ENCODE measurements at regions of chr2 and their contacts with region 1.

Region 1: GRCh38 chr2:198162276-198162675 is 357.9 kb downstream of the PLCL1 start:
- DNase-seq: peak in 2 of 10 donors; percentile 43 to 52
- H3K4me3 ChIP-seq: peak overlapping the region in 2 of 59 donors; percentile 5 to 27
- H3K27ac ChIP-seq: peak overlapping the region in 58 of 59 donors; percentile 53 to 97 (median 92)
- H3K27me3 ChIP-seq: no peaks in the 10 kb centered on the region
- CTCF ChIP-seq: peak in 3 of 56 donors; percentile 6 to 19 (median 13)

Region 2: GRCh38 chr2:197986977-197987376 is 175.3 kb before region 1 on chr2:
- intact Hi-C with region 1: no loop called
- DNase-seq: no peak
- H3K4me3 ChIP-seq: no peak overlapping the region
- H3K27ac ChIP-seq: no peak overlapping the region
- H3K27me3 ChIP-seq: no peaks in the 10 kb centered on the region
- CTCF ChIP-seq: no peak

Region 3: DNA sequence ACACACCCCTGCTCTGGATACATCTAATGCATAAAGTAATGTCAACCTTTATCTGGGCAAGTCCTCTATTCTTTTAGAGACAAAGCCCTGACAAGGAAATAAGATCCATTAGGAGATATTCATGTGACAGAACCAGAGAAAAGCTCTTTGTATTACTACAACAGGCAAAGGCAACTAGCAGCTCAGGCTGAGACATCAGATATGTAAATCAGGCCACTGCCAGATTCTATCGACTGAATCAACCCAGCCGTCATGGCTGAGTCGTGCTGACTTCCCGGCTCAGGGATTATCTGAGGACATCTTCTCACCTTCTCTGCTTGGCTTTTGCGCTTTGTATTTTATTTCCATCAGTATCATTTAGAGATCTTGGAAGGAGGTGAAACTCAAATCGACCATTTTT is 63.4 kb before region 1 on chr2:
- intact Hi-C with region 1: loop called in 1 of 2 experiments (anchors 5 kb)
- DNase-seq: peak in 8 of 10 donors; percentile 22 to 72 (median 54)
- H3K4me3 ChIP-seq: peak overlapping the region in 2 of 59 donors; percentile 4 to 15
- H3K27ac ChIP-seq: peak overlapping the region in 56 of 59 donors; percentile 1 to 90 (median 76)
- H3K27me3 ChIP-seq: no peaks in the 10 kb centered on the region
- CTCF ChIP-seq: peak in 2 of 56 donors; percentile 14 to 26

Region 4: GRCh38 chr2:198214114-198214596 is 51.9 kb after region 1 on chr2:
- intact Hi-C with region 1: loop called in 1 of 2 experiments (anchors 10 kb)
- DNase-seq: no peak
- H3K4me3 ChIP-seq: no peak overlapping the region
- H3K27ac ChIP-seq: peak overlapping the region in 1 of 59 donors; percentile 17
- H3K27me3 ChIP-seq: no peaks in the 10 kb centered on the region
- CTCF ChIP-seq: no peak

Region 5: GRCh38 chr2:198273660-198274059 is 111.4 kb after region 1 on chr2:
- intact Hi-C with region 1: loop called in 1 of 2 experiments (anchors 10 kb)
- DNase-seq: peak in 1 of 10 donors; percentile 24
- H3K4me3 ChIP-seq: peak overlapping the region in 2 of 59 donors; percentile 27
- H3K27ac ChIP-seq: peak overlapping the region in 39 of 59 donors; percentile 3 to 76 (median 58)
- H3K27me3 ChIP-seq: no peaks in the 10 kb centered on the region
- CTCF ChIP-seq: peak in 1 of 56 donors; percentile 16

Region 6: DNA sequence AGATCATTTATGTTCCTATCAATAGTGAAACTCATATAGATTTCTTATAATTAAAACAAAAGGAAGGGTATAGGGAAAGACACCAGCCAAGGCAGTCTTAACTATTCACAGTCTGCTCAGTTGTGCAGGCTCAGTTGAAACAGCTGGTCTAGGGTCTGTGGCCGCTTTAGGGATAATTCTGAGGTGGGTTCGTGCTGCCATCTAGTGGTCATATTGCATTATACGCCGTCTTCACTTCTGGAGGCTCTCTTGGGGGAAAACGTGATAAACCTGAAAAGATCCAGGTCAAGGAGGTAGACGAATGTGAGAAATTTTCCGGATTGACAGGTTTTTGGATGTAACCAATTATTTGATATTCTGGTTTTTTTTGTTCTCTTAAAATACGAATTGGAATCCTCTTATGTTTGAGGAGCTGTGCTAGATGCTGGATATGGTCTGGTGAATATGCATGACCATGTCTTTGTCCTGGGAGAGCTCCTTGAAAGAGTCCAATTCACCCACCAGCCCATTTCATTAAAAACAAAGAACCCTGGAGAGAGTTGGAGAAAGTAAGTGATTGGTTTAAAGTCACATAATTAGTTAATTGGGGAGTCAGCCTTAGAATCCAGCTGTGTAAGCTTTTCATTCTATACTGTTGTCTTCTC is 134.5 kb after region 1 on chr2:
- intact Hi-C with region 1: loop called in 1 of 2 experiments (anchors 10 kb)
- DNase-seq: peak in 8 of 10 donors; percentile 37 to 76 (median 56)
- H3K4me3 ChIP-seq: peak overlapping the region in 8 of 59 donors; percentile 3 to 47 (median 18)
- H3K27ac ChIP-seq: no peak overlapping the region
- H3K27me3 ChIP-seq: no peaks in the 10 kb centered on the region
- CTCF ChIP-seq: peak; percentile 74 to 98 (median 91)